Mammary epithelial cell (primary cell): ENCODE measurements at regions of chr17 and their contacts with region 1.

Region 1: GRCh38 chr17:66392783-66393437 is 90.5 kb downstream of the PRKCA start:
- DNase-seq: no peak
- H3K4me3 ChIP-seq: no peak overlapping the region
- H3K27ac ChIP-seq: no peak overlapping the region
- H3K4me1 ChIP-seq: peaks cover under 1% of the 10 kb centered on the region
- H3K27me3 ChIP-seq: no peaks in the 10 kb centered on the region
- CTCF ChIP-seq: no peak

Region 2: DNA sequence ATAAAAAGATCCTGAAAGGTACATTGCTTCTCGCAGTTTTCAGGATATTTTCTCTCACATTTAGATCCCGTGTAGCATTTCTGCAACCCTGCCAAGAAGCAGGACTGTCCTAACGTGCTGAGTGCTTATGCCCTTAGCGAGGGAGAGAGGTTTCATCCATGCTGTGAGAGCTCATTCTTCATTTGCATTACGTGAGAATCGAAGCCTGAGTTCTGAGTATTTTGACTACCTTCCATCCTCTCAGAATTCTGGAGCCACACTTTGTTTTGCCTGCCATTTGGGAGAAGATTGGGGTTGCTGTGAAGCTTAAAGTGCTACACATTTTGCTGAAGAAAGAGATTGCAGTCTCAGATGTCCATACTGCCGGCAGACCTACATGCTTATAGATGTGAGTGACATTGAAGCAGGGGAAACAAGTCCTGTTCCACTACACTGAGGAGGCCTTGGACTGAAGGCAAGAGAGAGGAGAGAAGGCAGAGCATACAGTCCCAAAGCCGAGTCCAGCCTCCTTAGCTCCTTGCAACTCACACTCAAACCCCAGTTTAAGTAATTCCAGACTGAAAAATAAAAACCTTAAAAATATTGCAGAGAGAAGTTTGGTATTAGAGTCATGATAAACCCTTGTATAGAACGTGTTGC is 92.5 kb after region 1 on chr17:
- CTCF ChIA-PET with region 1: no interaction called
- dilution Hi-C with region 1: loop called (anchors 5 kb)
- in situ Hi-C with region 1: no loop called
- intact Hi-C with region 1: no loop called
- DNase-seq: no peak
- H3K4me3 ChIP-seq: no peak overlapping the region
- H3K27ac ChIP-seq: no peak overlapping the region
- H3K4me1 ChIP-seq: no peaks in the 10 kb centered on the region
- H3K27me3 ChIP-seq: no peaks in the 10 kb centered on the region
- CTCF ChIP-seq: no peak